Posterior vena cava (tissue), 2 donors: ENCODE measurements at regions of chr4 and their contacts with region 1.

Region 1: GRCh38 chr4:148103597-148104355 is 338.4 kb downstream of the NR3C2 start:
- DNase-seq: no peak

Region 2: GRCh38 chr4:148090503-148091476 is 13.0 kb before region 1 on chr4:
- intact Hi-C with region 1: loop called in 1 of 2 experiments (anchors 1 kb)
- DNase-seq: peak; percentile 75

Region 3: GRCh38 chr4:148795156-148795864 is 691.5 kb after region 1 on chr4:
- intact Hi-C with region 1: no loop called
- DNase-seq: no peak